Cardiac septum (tissue), 1 donor: ENCODE measurements at regions of chr18 and their contacts with region 1.

Region 1: GRCh38 chr18:2060086-2060485 is 511.2 kb downstream of the METTL4 start:
- DNase-seq: no peak

Region 2: GRCh38 chr18:1914490-1914889 is 145.6 kb before region 1 on chr18:
- intact Hi-C with region 1: no loop called
- DNase-seq: no peak

Region 3: GRCh38 chr18:2002151-2002550 is 57.9 kb before region 1 on chr18:
- intact Hi-C with region 1: loop called (anchors 10 kb)
- DNase-seq: no peak